SK-N-SH (cell line): ENCODE measurements at regions of chr10 and their contacts with region 1.

Region 1: DNA sequence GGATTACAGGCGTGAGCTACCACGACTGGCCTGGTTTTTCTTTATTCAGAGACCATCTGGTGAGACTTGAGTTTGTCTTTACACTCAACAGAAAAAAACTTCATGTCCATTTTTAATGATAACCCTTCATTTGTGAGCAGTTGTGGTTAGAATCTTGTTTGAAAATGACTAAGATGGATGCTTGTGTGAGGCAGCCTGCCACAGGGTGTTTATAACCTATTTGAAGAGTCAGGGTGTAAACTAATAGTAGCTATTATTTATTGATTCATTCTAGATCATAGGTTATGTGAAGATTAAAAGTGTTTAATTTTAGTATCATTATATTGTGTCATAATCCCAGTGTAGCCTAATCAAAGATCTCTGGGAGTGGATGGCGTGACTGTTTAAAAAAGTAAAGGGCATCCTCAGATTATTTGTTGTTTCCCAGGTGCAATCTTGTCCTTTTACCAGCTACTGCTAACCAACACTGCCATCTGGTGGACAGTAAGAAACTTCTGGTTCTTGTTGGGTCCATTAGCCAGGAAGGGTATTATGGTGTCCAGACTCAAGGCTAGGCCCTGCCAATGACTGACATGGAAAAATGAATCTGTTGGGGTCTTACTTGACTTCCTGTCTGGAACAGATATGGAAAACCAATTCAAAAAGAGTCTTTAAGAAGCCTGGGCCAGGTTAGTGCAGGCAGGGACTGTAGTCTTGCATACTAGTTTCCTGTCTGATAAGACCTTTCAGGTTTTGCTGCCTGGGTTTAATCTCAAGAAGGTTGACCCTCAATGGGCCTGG is 24.9 kb downstream of the NRBF2 start:
- DNase-seq: peak; percentile 54
- H3K4me3 ChIP-seq: no peak overlapping the region
- H3K27ac ChIP-seq: no peak overlapping the region
- H3K4me1 ChIP-seq: no peaks in the 10 kb centered on the region
- H3K27me3 ChIP-seq: no peaks in the 10 kb centered on the region
- CTCF ChIP-seq: peak; percentile 88
- EP300 ChIP-seq: no peak
- RAD21 ChIP-seq: peak; percentile 91

Region 2: DNA sequence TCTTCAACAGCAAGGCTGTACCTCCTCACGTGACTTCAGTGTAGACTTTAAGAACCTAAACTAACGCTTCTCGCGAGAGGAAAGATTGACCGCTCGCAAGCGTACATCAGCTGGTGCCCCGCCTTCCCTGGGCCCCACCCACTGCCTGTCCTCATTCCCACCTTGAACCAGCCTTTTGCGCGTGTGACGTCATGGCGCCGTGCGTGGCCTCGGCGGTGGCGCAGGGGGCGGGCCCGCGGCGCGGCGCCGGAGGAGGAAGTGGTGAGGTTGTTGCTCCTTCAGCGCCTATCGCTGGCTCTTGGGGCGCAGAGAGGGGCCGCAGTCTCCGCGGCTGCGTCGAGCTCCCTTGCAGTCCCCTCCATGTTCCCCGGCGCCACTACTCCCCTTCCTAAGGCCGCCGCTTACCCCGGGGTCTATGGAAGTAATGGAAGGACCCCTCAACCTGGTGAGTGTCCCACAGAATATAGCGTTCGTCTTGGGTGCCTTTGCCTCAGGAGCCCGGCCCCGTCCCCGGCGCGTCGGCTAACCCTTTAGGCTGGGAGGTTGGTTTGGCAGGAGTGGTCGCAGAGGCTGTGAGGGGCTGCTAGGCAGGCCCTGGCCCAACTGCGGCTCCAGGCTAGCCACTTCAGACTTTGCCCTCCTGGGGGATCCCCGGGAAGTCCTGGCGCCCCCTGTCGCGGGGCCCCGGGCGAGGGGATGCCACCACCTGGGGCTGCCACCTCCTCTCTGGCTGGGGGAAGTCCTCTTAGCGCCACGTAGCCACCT is 24.8 kb before region 1 on chr10 and contains the start of gene NRBF2:
- CTCF ChIA-PET with region 1: interaction called, 38 read pairs
- POLR2A ChIA-PET with region 1: no interaction called
- DNase-seq: peak; percentile 96
- H3K4me3 ChIP-seq: peak within 1 kb of the TSS; percentile 91 to 97
- H3K27ac ChIP-seq: peak within 1 kb of the TSS; percentile 89 to 92
- H3K4me1 ChIP-seq: peaks cover 0 to 6% of the 10 kb centered on the region in 2 experiments; a peak in 3 of 4 replicates
- H3K27me3 ChIP-seq: no peaks in the 10 kb centered on the region
- CTCF ChIP-seq: peak; percentile 54
- EP300 ChIP-seq: no peak
- RAD21 ChIP-seq: no peak
- polyA plus RNA-seq, gene NRBF2: 8.9 and 13.2 TPM in 2 replicates

Region 3: DNA sequence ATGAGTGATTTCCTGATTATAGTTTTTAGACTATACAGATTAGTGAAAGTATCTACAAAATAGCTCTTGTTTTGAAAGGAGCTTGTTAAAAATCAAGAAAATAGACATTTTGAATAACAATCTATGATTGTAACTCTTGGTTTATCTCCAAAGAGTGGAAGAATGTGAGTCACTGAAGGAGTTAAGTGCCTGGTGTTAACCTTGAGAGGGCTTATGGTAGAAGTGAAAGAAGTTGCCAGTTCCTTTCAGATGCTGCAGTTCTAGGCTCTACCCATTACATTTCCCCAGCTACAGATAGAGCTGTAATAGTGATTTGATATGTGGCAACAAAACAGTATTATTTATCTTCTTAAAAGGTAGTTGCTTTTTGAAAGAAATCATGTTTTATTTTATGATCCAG is 12.3 kb before region 1 on chr10:
- CTCF ChIA-PET with region 1: interaction called, 38 read pairs
- POLR2A ChIA-PET with region 1: no interaction called
- DNase-seq: no peak
- H3K4me3 ChIP-seq: no peak overlapping the region
- H3K27ac ChIP-seq: no peak overlapping the region
- H3K4me1 ChIP-seq: no peaks in the 10 kb centered on the region; a peak in 1 of 4 replicates
- H3K27me3 ChIP-seq: no peaks in the 10 kb centered on the region
- CTCF ChIP-seq: no peak
- EP300 ChIP-seq: no peak
- RAD21 ChIP-seq: no peak